ENCODE measurements at regions of chr18 and their contacts with region 1.

Region 1: GRCh38 chr18:76349067-76349715 is 145.9 kb downstream of the ZNF516 start:
- DNase-seq: peak; percentile 55
- ATAC-seq: peak; percentile 65
- H3K4me3 ChIP-seq: peak overlapping the region; percentile 20 to 44
- H3K27ac ChIP-seq: no peak overlapping the region
- H3K4me1 ChIP-seq: peaks cover 18% of the 10 kb centered on the region
- H3K27me3 ChIP-seq: no peaks in the 10 kb centered on the region
- CTCF ChIP-seq: no peak

Region 2: DNA sequence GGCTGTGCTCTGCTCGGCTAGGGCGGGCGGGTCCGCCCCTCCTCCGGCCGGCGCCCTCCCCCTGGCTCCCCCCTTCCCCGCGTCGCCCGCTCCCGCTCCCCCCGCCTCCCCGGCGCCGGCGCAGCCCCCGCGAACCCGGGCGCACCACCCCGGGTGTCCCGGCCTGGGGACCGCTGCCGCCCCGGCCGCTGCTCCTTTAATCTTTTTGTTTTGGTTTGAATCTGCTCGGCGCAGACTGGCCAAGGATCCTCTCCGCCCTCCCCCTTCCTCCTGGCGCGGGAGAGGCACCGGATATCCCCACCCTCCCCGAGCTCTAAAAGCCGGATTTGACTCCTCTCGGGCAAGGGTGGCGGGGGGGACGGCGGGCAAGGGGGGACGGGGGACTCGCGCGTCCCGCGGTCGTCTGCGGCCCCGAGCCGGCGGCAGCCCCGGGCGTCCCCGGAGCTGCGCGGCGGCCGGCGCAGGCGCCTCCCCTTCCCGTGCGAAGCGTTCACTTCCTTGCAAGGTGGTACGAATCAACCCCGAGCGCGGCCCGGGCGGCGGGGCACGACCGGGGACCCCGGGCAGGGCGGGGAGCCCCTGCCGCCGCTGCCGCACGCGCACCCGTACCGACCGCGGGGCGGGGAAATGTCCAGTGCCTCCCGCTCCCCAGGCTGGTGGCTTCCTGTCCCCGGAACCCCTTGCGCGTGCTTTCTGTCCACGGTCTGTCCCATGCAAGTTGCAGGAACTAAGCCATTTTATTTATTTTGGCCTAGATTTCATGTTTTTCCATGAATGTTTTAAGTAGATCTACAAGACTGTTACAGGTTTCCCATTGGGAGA is 1139.9 kb before region 1 on chr18 and contains the start of gene PTGR3:
- CTCF ChIA-PET with region 1: no interaction called
- POLR2A ChIA-PET with region 1: no interaction called
- in situ Hi-C with region 1: no loop called
- intact Hi-C with region 1: loop called (anchors 2 kb)
- DNase-seq: peak; percentile 55
- ATAC-seq: peak; percentile 82
- H3K4me3 ChIP-seq: peak within 1 kb of the TSS; percentile 84 to 89
- H3K27ac ChIP-seq: peak within 1 kb of the TSS; percentile 95
- H3K4me1 ChIP-seq: peaks cover 51% of the 10 kb centered on the region
- H3K27me3 ChIP-seq: no peaks in the 10 kb centered on the region
- CTCF ChIP-seq: no peak
- total RNA-seq, gene PTGR3: 45.0 TPM

Region 3: GRCh38 chr18:76145521-76146376 is 203.4 kb before region 1 on chr18:
- CTCF ChIA-PET with region 1: no interaction called
- POLR2A ChIA-PET with region 1: no interaction called
- in situ Hi-C with region 1: no loop called
- intact Hi-C with region 1: no loop called
- DNase-seq: no peak
- ATAC-seq: no peak
- H3K4me3 ChIP-seq: no peak overlapping the region
- H3K27ac ChIP-seq: no peak overlapping the region
- H3K4me1 ChIP-seq: no peaks in the 10 kb centered on the region
- H3K27me3 ChIP-seq: peaks cover 3% of the 10 kb centered on the region; the same call in 1 of the 2 replicates
- CTCF ChIP-seq: no peak

Region 4: DNA sequence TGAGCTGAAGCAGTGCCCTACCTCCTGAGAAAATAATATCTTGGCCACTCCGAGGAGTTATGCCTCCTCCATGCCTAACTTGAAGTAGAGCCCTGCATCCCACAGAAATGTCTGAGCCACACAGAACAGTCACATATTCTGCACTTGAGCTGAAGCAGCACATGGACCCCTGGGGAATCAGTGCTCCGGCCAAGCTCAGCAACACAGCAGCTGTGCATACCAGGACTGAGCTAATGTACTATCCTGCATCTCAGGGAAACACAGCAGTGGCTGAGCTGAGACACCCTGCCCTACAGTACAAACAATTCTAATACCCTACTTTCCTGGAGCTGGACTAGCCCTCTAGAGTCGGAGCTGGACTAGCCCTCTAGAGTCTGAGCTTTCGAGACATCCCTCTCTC is 21.1 kb before region 1 on chr18:
- CTCF ChIA-PET with region 1: no interaction called
- POLR2A ChIA-PET with region 1: no interaction called
- in situ Hi-C with region 1: no loop called
- intact Hi-C with region 1: no loop called
- DNase-seq: no peak
- ATAC-seq: no peak
- H3K4me3 ChIP-seq: no peak overlapping the region
- H3K27ac ChIP-seq: no peak overlapping the region
- H3K4me1 ChIP-seq: no peaks in the 10 kb centered on the region
- H3K27me3 ChIP-seq: peaks cover 7% of the 10 kb centered on the region
- CTCF ChIP-seq: no peak